ENCODE measurements at regions of chr15 and their contacts with region 1.

Region 1: GRCh38 chr15:39920510-39921273 is 626 bp upstream of the GPR176 start:
- DNase-seq: peak; percentile 63 to 77 (median 70)
- H3K4me3 ChIP-seq: peak overlapping the region; percentile 31 to 57
- H3K4me3 Mint-ChIP-seq: peak overlapping the region; percentile 84 to 92 (median 88)
- H3K27ac ChIP-seq: no peak overlapping the region
- H3K27ac Mint-ChIP-seq: peak overlapping the region in 4 of 7 donors; percentile 38 to 85 (median 69)
- H3K4me1 ChIP-seq: peaks cover 19% of the 10 kb centered on the region
- H3K4me1 Mint-ChIP-seq: peaks cover 5 to 22% (median 10%) of the 10 kb centered on the region in 4 donors
- H3K27me3 ChIP-seq: peaks cover 20% of the 10 kb centered on the region
- H3K27me3 Mint-ChIP-seq: peaks cover 16 to 21% of the 10 kb centered on the region in 2 donors

Region 2: DNA sequence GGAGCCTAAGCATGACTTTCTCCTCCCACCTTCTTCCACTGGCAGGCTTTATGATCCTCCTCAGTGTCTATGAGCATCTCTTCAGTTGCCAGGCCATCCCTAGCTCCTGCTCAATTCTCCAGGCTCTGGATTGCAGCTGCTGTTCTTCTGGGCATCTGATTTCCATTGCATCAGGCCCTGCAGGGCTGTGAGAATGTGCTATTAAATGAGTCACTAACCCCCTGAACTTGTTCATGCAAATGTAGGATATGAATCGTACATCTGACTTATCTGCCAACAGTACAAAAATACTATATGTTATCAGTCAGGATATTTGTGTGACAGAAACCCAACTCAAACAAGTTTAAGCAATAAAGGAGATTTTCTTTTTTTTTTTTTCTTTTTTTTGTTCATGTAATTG is 12.5 kb before region 1 on chr15:
- CTCF ChIA-PET with region 1: no interaction called
- POLR2A ChIA-PET with region 1: no interaction called
- intact Hi-C with region 1: no loop called
- DNase-seq: no peak
- H3K4me3 ChIP-seq: no peak overlapping the region
- H3K4me3 Mint-ChIP-seq: no peak overlapping the region
- H3K27ac ChIP-seq: no peak overlapping the region
- H3K27ac Mint-ChIP-seq: no peak overlapping the region
- H3K4me1 ChIP-seq: no peaks in the 10 kb centered on the region
- H3K4me1 Mint-ChIP-seq: no peaks in the 10 kb centered on the region
- H3K27me3 ChIP-seq: no peaks in the 10 kb centered on the region
- H3K27me3 Mint-ChIP-seq: peaks cover 8 to 15% of the 10 kb centered on the region in 2 donors

Region 3: GRCh38 chr15:39934397-39935071 is 13.8 kb after region 1 on chr15:
- CTCF ChIA-PET with region 1: interaction called, 5 read pairs
- POLR2A ChIA-PET with region 1: interaction called, 16 read pairs
- intact Hi-C with region 1: loop called (anchors 1 kb)
- DNase-seq: peak in 1 of 5 donors; percentile 5
- H3K4me3 ChIP-seq: peak overlapping the region; percentile 66 to 74
- H3K4me3 Mint-ChIP-seq: peak overlapping the region; percentile 88 to 99 (median 93)
- H3K27ac ChIP-seq: peak overlapping the region; percentile 36
- H3K27ac Mint-ChIP-seq: peak overlapping the region; percentile 10 to 92 (median 80)
- H3K4me1 ChIP-seq: peaks cover 17% of the 10 kb centered on the region
- H3K4me1 Mint-ChIP-seq: peaks cover 22 to 38% (median 25%) of the 10 kb centered on the region in 4 donors
- H3K27me3 ChIP-seq: no peaks in the 10 kb centered on the region
- H3K27me3 Mint-ChIP-seq: peaks cover 0 to 3% of the 10 kb centered on the region in 2 donors

Region 4: GRCh38 chr15:40160689-40161688 is 240.3 kb after region 1 on chr15 and contains the start of gene BUB1B:
- CTCF ChIA-PET with region 1: no interaction called
- POLR2A ChIA-PET with region 1: no interaction called
- intact Hi-C with region 1: loop called (anchors 5 kb)
- DNase-seq: peak; percentile 92 to 95 (median 93)
- H3K4me3 ChIP-seq: peak within 1 kb of the TSS; percentile 84 to 88
- H3K4me3 Mint-ChIP-seq: no peak within 1 kb of the TSS
- H3K27ac ChIP-seq: peak within 1 kb of the TSS; percentile 28
- H3K27ac Mint-ChIP-seq: no peak within 1 kb of the TSS
- H3K4me1 ChIP-seq: peaks cover 19% of the 10 kb centered on the region
- H3K4me1 Mint-ChIP-seq: peaks cover 0 to 3% (median 2%) of the 10 kb centered on the region in 4 donors
- H3K27me3 ChIP-seq: no peaks in the 10 kb centered on the region
- H3K27me3 Mint-ChIP-seq: no peaks in the 10 kb centered on the region
- total RNA-seq, gene BUB1B: 0.55 to 0.89 TPM